Endothelial cell of umbilical vein (primary cell): ENCODE measurements at regions of chr16 and their contacts with region 1.

Region 1: DNA sequence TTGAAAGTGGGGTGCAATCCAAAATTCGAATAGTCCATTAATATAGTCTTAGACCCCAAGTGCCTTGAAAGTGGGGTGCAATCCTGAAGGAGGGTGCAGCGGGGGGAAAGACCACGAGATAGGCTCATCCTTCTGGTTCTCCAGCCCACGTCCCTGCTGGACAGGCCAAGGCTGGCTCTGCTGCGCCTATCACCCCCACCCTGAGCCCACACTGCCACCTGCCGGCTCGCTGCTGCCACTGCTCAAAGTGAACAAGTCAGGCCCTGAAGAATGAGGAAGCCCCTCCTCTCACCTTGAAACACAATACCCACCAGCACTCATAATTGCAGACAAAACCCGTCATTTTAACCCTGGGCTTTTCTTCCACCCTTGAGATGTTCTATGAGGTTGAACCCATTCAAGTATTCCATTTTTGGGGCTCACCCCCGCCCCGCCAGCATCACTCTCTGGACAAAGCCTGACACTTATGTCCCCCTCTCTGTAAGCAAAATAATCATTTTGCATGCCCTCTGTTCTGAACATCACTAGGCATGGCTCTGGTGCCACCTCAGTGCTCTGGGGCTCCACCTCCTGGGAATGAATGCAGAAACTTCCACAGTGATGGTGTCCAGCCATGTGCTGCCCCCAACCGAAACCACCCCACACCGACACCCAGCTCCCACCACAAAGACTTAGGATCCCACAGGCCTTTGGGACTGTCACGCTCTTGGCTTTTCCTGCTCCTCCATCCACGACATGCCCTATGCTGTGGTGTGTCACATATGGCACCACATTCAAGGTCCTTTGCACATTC is 56.8 kb downstream of the BEAN1 start:
- DNase-seq: peak; percentile 79
- H3K4me3 ChIP-seq: no peak overlapping the region
- H3K27ac ChIP-seq: no peak overlapping the region
- H3K4me1 ChIP-seq: peaks cover 2% of the 10 kb centered on the region
- H3K27me3 ChIP-seq: no peaks in the 10 kb centered on the region
- CTCF ChIP-seq: peak; percentile 98 to 99
- POLR2A ChIP-seq: no peak

Region 2: DNA sequence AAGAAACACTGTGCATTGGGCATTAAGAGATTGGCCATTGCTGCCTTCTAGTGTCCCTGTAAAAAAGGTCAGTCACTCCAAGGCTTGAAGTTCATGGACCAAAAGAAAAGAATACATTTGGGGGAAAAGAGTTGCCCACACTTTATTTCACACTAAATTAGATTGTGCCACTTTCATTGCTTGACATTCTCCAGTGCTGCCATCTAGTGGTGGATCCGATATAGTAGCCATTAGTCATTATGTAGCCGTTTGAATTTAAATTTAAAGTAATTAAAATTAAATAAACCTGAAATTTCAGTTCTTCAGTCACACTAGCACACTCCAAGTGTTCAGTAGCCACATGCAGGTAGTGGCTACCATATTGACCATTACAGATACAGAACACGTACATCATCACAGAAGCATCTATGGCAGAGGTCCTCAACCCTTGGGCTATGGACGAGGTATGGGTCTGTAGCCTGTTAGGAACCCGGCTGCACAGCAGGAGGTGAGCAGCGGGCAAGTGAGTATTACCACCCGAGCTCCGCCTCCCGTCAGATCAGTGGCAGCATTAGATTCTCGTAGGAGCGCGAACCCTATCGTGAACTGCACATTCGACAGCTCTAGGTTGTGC is 139.2 kb before region 1 on chr16:
- CTCF ChIA-PET with region 1: interaction called, 13 read pairs
- POLR2A ChIA-PET with region 1: no interaction called
- dilution Hi-C with region 1: no loop called
- intact Hi-C with region 1: loop called (anchors 1 kb)
- DNase-seq: peak; percentile 52
- H3K4me3 ChIP-seq: no peak overlapping the region
- H3K27ac ChIP-seq: no peak overlapping the region
- H3K4me1 ChIP-seq: no peaks in the 10 kb centered on the region
- H3K27me3 ChIP-seq: peaks cover 0 to 2% of the 10 kb centered on the region in 2 experiments
- CTCF ChIP-seq: peak; percentile 59 to 65
- POLR2A ChIP-seq: no peak

Region 3: GRCh38 chr16:66406534-66407221 is 77.2 kb before region 1 on chr16:
- CTCF ChIA-PET with region 1: interaction called, 28 read pairs
- POLR2A ChIA-PET with region 1: no interaction called
- dilution Hi-C with region 1: no loop called
- intact Hi-C with region 1: loop called (anchors 1 kb)
- DNase-seq: peak; percentile 75
- H3K4me3 ChIP-seq: peak overlapping the region in 2 of 3 experiments; percentile 12 to 31
- H3K27ac ChIP-seq: peak overlapping the region; percentile 27
- H3K4me1 ChIP-seq: peaks cover 34% of the 10 kb centered on the region
- H3K27me3 ChIP-seq: no peaks in the 10 kb centered on the region
- CTCF ChIP-seq: peak; percentile 81
- POLR2A ChIP-seq: peak; percentile 76

Region 4: GRCh38 chr16:66511615-66512500 is 28.0 kb after region 1 on chr16:
- CTCF ChIA-PET with region 1: interaction called, 17 read pairs
- POLR2A ChIA-PET with region 1: no interaction called
- dilution Hi-C with region 1: no loop called
- intact Hi-C with region 1: loop called (anchors 1 kb)
- DNase-seq: peak; percentile 70
- H3K4me3 ChIP-seq: no peak overlapping the region
- H3K27ac ChIP-seq: peak overlapping the region; percentile 86
- H3K4me1 ChIP-seq: peaks cover 58% of the 10 kb centered on the region
- H3K27me3 ChIP-seq: no peaks in the 10 kb centered on the region
- CTCF ChIP-seq: no peak
- POLR2A ChIP-seq: no peak

Region 5: DNA sequence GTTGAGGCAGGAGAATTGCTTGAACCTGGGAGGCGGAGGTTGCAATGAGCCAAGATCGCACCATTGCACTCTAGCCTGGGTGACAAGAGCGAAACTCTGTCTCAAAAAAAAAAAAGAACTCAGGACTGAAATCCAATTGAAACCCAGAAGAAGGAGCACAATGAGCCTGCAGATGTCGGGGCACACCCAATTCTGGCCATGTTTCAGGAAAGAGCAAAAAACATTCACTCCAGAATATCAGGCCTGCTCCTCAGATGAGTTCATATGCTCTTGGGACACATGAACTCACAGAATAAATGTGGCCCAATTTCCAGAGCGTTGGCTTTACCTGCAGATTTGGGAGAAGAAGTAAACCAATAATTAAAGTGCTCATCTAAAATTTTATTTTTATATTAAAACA is 92.4 kb after region 1 on chr16:
- CTCF ChIA-PET with region 1: no interaction called
- POLR2A ChIA-PET with region 1: no interaction called
- dilution Hi-C with region 1: no loop called
- intact Hi-C with region 1: no loop called
- DNase-seq: no peak
- H3K4me3 ChIP-seq: no peak overlapping the region
- H3K27ac ChIP-seq: no peak overlapping the region
- H3K4me1 ChIP-seq: peaks cover 11% of the 10 kb centered on the region
- H3K27me3 ChIP-seq: peaks cover 4 to 13% of the 10 kb centered on the region in 2 experiments
- CTCF ChIP-seq: no peak
- POLR2A ChIP-seq: no peak

Region 6: DNA sequence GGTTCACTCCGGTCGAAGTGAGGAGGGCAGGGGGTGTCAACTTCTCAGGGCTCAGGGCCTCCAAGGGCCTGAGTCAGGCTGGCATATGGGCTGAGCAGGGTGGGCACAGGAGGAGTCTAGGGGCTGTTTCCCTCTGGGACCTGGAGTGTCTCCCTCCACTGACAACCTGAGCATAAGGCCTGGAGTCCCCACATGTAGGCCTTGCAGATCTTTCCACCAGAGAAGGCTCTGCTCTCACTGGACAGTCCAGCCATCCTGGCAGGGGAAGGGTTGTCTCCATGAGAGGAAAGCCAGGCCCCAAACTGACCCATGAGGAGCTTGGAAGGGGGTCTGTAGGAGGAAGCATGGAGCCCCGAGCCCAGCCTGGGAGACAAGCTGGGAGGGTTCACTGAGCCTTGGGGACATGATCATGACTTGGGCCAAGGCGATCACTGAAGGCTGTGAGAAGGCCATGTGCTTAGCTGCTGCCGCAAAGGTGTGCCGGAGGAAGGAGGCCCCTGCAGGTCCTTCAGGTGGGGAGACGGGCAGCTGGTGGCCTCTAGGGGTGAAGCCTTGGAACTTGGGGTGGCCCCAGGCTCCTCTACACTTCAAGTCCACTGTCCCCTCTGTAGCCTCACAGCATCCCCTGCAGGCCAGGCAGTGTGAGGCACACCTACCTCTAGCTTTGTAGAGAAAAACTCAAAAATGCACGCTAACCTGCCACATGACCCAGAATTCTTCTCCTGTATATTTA is 105.3 kb after region 1 on chr16:
- CTCF ChIA-PET with region 1: interaction called, 10 read pairs
- POLR2A ChIA-PET with region 1: no interaction called
- dilution Hi-C with region 1: no loop called
- intact Hi-C with region 1: no loop called
- DNase-seq: peak; percentile 45
- H3K4me3 ChIP-seq: no peak overlapping the region
- H3K27ac ChIP-seq: no peak overlapping the region
- H3K4me1 ChIP-seq: peaks cover 7% of the 10 kb centered on the region
- H3K27me3 ChIP-seq: no peaks in the 10 kb centered on the region
- CTCF ChIP-seq: peak; percentile 62 to 76
- POLR2A ChIP-seq: no peak